H1 (cell line): ENCODE measurements at regions of chr3 and their contacts with region 1.

Region 1: GRCh38 chr3:16516695-16517481 is 3.4 kb upstream of the RFTN1 start:
- DNase-seq: no peak
- H3K4me3 ChIP-seq: no peak overlapping the region
- H3K27ac ChIP-seq: no peak overlapping the region
- H3K4me1 ChIP-seq: peaks cover 3 to 16% (median 5%) of the 10 kb centered on the region in 4 experiments
- H3K27me3 ChIP-seq: peaks cover 13 to 29% (median 27%) of the 10 kb centered on the region in 4 experiments
- CTCF ChIP-seq: peak; percentile 47 to 70 (median 61)
- EP300 ChIP-seq: no peak
- POLR2A ChIP-seq: no peak
- RAD21 ChIP-seq: peak; percentile 76 to 86

Region 2: GRCh38 chr3:16319307-16319706 is 197.6 kb before region 1 on chr3:
- CTCF ChIA-PET with region 1: interaction called, 28 read pairs
- POLR2A ChIA-PET with region 1: no interaction called
- DNase-seq: no peak
- H3K4me3 ChIP-seq: no peak overlapping the region
- H3K27ac ChIP-seq: no peak overlapping the region
- H3K4me1 ChIP-seq: no peaks in the 10 kb centered on the region
- H3K27me3 ChIP-seq: no peaks in the 10 kb centered on the region
- CTCF ChIP-seq: peak; percentile 44 to 73 (median 62)
- EP300 ChIP-seq: no peak
- POLR2A ChIP-seq: no peak
- RAD21 ChIP-seq: peak; percentile 58 to 67

Region 3: DNA sequence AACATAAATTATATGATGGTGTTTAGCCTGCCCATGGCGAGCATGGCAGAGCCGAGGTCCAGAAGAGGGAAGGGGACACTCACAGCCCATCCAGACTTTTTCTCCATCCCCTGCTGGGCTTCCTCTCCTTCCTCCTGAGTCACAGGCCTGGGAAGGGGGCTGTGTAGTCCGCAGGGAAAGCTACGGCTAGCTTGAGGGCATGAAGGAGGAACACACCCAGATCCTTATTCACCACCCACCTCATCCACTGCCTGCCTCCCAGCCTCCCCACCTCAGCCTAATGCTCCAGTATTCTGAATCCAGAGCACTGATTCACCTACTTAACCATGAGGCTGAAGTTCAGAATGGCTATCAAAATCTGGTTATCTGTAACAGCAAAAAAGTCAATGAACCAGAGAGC is 154.1 kb before region 1 on chr3:
- CTCF ChIA-PET with region 1: interaction called, 26 read pairs
- POLR2A ChIA-PET with region 1: no interaction called
- DNase-seq: no peak
- H3K4me3 ChIP-seq: no peak overlapping the region
- H3K27ac ChIP-seq: no peak overlapping the region
- H3K4me1 ChIP-seq: no peaks in the 10 kb centered on the region; a peak in 1 of 7 replicates
- H3K27me3 ChIP-seq: no peaks in the 10 kb centered on the region
- CTCF ChIP-seq: no peak
- EP300 ChIP-seq: no peak
- POLR2A ChIP-seq: no peak
- RAD21 ChIP-seq: no peak

Region 4: DNA sequence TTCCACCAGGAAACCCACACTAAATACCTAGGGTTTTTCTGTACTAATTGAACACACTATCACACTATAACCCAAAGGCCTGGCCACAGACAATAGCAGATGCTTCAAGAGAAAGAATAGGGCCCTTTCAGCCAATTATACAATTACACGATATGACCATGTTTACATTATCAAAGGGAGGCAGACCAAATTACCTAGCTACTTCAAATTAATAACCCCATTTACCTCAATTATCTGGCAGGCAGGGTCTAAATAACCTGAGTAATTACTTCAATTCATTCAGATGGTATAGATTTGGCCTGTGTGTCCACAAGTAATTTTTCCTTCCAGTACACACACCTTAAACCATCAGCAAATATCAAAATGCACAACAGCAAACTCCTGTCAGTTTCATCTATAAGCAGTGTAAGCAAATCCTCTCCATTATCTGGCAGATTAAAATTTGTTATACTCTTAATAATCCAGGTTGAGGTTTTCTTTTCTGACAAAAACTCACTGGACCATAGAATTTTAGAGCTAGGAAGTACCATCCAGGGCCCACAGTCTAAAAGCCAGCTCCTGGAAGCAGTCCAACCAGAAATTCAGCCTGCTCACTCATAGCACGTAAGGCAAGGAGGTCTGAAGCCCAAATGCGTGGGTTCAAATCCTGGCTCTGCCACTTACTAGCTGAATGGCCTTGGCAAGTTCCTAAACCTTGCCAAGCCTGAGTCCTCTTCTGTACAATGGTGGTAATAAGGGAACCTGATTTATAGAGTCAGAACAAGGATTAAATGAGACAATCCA is 55.2 kb before region 1 on chr3:
- CTCF ChIA-PET with region 1: no interaction called
- POLR2A ChIA-PET with region 1: no interaction called
- DNase-seq: no peak
- H3K4me3 ChIP-seq: no peak overlapping the region
- H3K27ac ChIP-seq: no peak overlapping the region
- H3K4me1 ChIP-seq: no peaks in the 10 kb centered on the region
- H3K27me3 ChIP-seq: no peaks in the 10 kb centered on the region; a peak in 1 of 7 replicates
- CTCF ChIP-seq: no peak
- EP300 ChIP-seq: no peak
- POLR2A ChIP-seq: no peak
- RAD21 ChIP-seq: no peak

Region 5: DNA sequence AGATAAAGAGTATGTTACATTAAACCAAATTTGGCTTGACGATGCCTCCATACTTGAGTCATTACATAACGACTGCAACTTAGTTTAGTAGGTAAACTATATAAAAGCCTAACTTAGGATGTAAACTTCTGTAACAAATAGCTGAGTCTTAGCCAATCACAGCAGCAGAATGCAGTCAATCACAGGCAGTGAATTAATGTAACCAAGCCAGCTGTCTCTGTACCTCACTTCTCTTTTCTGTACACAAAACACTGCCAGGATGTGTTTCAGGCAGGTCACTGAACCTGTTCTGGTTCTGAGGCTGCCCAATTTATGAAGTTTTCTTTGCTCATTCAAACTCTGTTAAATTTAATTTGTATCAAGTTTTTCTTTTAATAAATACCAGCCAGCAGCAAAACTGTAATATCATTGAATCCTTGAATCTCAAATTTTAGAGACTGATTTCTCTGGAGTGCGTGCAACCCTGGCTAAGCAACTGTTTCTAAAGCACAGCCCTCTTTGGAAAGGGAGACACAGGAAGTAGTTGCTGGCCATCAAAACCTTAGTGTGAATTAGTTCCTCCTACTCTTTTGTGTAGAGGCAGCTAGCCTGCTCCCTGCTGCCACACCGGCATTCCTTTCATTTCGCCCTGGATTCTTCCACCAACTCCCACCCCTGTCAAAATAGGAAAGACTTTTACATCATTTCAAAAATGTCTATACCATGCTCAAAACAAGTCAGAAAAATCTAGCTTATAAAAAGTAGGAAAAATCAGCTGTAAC is 18.6 kb before region 1 on chr3:
- CTCF ChIA-PET with region 1: interaction called, 10 read pairs
- POLR2A ChIA-PET with region 1: no interaction called
- DNase-seq: no peak
- H3K4me3 ChIP-seq: no peak overlapping the region
- H3K27ac ChIP-seq: no peak overlapping the region
- H3K4me1 ChIP-seq: peaks cover 0 to 20% (median 7%) of the 10 kb centered on the region in 4 experiments
- H3K27me3 ChIP-seq: no peaks in the 10 kb centered on the region
- CTCF ChIP-seq: no peak
- EP300 ChIP-seq: no peak
- POLR2A ChIP-seq: no peak
- RAD21 ChIP-seq: no peak; a peak in 1 of 4 replicates

Region 6: GRCh38 chr3:16550676-16551341 is 33.9 kb after region 1 on chr3:
- CTCF ChIA-PET with region 1: interaction called, 12 read pairs
- POLR2A ChIA-PET with region 1: interaction called, 4 read pairs
- DNase-seq: peak; percentile 36 to 87
- H3K4me3 ChIP-seq: peak overlapping the region in 1 of 4 experiments; percentile 27; a peak in 2 of 8 replicates
- H3K27ac ChIP-seq: no peak overlapping the region
- H3K4me1 ChIP-seq: peaks cover 0 to 4% (median 2%) of the 10 kb centered on the region in 4 experiments; a peak in 4 of 7 replicates
- H3K27me3 ChIP-seq: no peaks in the 10 kb centered on the region
- CTCF ChIP-seq: peak; percentile 73 to 94 (median 90)
- EP300 ChIP-seq: 0 out of 3 replicates have a peak, but pooled peaks of 1 of the 2 experiments have one; percentile 13
- POLR2A ChIP-seq: peak in 1 of 2 experiments; percentile 47; a peak in 1 of 3 replicates
- RAD21 ChIP-seq: peak; percentile 98 to 99